ENCODE measurements at regions of chr2 and their contacts with region 1.

Region 1: GRCh38 chr2:161713706-161714105 is 89.5 kb downstream of the SLC4A10 start:
- DNase-seq: no peak
- H3K4me3 ChIP-seq: no peak overlapping the region
- H3K4me3 Mint-ChIP-seq: no peak overlapping the region
- H3K27ac Mint-ChIP-seq: no peak overlapping the region
- H3K4me1 ChIP-seq: no peaks in the 10 kb centered on the region
- H3K4me1 Mint-ChIP-seq: no peaks in the 10 kb centered on the region
- H3K27me3 ChIP-seq: no peaks in the 10 kb centered on the region
- H3K27me3 Mint-ChIP-seq: no peaks in the 10 kb centered on the region
- CTCF ChIP-seq: no peak

Region 2: DNA sequence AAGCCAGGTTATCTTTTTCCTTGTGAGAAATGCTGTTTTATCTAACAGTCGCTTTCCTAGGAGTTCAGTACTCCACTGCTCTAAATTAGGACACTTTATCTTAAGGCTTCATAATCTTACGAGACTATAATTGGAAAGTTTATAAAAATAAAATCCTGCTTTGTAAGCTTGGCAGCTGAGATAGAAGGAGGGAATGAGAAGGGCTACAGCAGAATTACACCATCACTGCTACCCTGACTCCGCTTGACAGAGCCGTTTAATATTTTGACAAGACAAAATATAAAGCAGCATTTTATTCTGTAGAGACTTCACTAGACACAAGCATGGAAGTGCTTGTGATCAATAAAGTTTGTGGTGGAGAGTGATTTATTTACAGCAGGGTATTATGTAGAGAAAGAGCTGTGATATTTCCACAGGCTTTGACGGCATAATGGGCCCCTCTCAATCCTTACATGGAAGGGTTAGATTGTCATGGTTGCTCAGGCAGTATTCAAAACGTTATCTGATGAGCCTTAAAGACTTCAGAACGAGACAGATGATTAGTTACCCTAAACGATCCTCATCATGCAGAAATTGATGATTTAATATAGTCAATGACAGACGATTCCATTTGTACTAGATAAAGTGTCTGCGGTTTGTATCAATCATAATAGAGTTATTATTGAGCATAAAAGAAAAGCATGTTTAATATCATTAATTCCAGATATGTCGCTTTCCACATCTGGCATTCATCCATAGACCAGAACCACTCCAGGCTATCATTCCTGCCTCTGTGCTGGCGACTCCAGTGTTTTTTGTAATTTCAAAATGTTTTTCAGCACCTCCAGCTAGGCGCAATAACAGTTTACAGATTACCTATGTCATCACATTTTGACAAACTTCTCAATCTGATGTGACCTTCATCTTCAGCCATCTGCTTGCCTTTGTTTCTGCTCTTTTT is 1779.9 kb after region 1 on chr2:
- CTCF ChIA-PET with region 1: no interaction called
- POLR2A ChIA-PET with region 1: interaction called, 12 read pairs
- intact Hi-C with region 1: no loop called
- DNase-seq: no peak
- H3K4me3 ChIP-seq: no peak overlapping the region
- H3K4me3 Mint-ChIP-seq: no peak overlapping the region
- H3K27ac Mint-ChIP-seq: no peak overlapping the region
- H3K4me1 ChIP-seq: no peaks in the 10 kb centered on the region
- H3K4me1 Mint-ChIP-seq: no peaks in the 10 kb centered on the region
- H3K27me3 ChIP-seq: no peaks in the 10 kb centered on the region
- H3K27me3 Mint-ChIP-seq: peaks cover 7% of the 10 kb centered on the region
- CTCF ChIP-seq: no peak

Measured in Caco-2 (cell line).